WTC11 (cell line): ENCODE measurements at regions of chr14 and their contacts with region 1.

Region 1: GRCh38 chr14:100709289-100710284 is 17.1 kb upstream of the DLK1 start:
- DNase-seq: peak; percentile 67
- ATAC-seq: peak; percentile 16
- H3K4me3 Mint-ChIP-seq: peak overlapping the region; percentile 75
- H3K27ac Mint-ChIP-seq: no peak overlapping the region
- H3K4me1 Mint-ChIP-seq: peaks cover 27% of the 10 kb centered on the region
- H3K27me3 Mint-ChIP-seq: peaks cover 21% of the 10 kb centered on the region
- CTCF ChIP-seq: peak; percentile 58

Region 2: GRCh38 chr14:100673036-100673806 is 36.4 kb before region 1 on chr14:
- CTCF ChIA-PET with region 1: interaction called, 11 read pairs
- POLR2A ChIA-PET with region 1: no interaction called
- DNase-seq: peak; percentile 62
- ATAC-seq: peak; percentile 87
- H3K4me3 Mint-ChIP-seq: peak overlapping the region; percentile 38
- H3K27ac Mint-ChIP-seq: no peak overlapping the region
- H3K4me1 Mint-ChIP-seq: peaks cover 26% of the 10 kb centered on the region
- H3K27me3 Mint-ChIP-seq: peaks cover 24% of the 10 kb centered on the region
- CTCF ChIP-seq: no peak

Region 3: DNA sequence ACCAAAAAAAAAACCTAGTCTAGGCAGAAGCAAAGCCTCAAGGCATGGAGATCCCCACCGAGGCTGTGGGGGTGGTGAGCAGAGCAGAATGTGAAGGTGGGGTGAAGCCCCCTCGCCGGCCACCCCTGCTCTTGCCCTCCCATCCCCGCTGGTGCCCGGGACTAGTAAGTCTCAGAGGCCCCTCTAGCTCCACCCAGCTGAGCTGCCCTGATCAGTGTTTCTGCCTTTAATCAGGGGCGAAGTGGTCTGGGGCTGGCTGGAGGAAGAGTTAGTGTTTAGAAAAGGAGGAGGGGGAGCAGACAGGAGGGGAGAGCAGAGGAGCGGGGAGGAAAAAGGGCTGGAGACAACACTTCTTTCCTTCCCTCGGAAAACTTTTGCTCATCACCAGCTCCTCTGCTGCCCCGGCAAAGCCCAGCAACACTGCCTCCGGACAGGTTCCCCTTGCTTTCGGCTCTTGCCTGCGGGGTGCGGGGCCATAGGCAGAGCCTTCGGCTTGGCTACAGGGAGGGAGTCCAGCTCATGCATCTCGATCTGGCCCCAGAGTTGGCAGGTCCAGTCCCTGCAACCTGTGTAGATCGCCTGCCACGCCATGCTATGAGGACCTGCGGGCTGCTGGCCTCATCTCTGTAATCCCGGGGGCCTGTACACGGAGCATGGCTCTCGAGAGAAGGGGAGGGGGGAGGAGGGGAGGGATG is 13.7 kb after region 1 on chr14:
- CTCF ChIA-PET with region 1: interaction called, 39 read pairs
- POLR2A ChIA-PET with region 1: no interaction called
- DNase-seq: no peak
- ATAC-seq: 0 out of 2 replicates have a peak, but pooled peaks have one; percentile 5
- H3K4me3 Mint-ChIP-seq: no peak overlapping the region
- H3K27ac Mint-ChIP-seq: no peak overlapping the region
- H3K4me1 Mint-ChIP-seq: peaks cover 31% of the 10 kb centered on the region
- H3K27me3 Mint-ChIP-seq: peaks cover 70% of the 10 kb centered on the region
- CTCF ChIP-seq: no peak

Region 4: GRCh38 chr14:100733152-100733850 is 23.7 kb after region 1 on chr14:
- CTCF ChIA-PET with region 1: interaction called, 25 read pairs
- POLR2A ChIA-PET with region 1: no interaction called
- DNase-seq: no peak
- ATAC-seq: no peak
- H3K4me3 Mint-ChIP-seq: no peak overlapping the region
- H3K27ac Mint-ChIP-seq: no peak overlapping the region
- H3K4me1 Mint-ChIP-seq: no peaks in the 10 kb centered on the region
- H3K27me3 Mint-ChIP-seq: peaks cover 19% of the 10 kb centered on the region
- CTCF ChIP-seq: no peak

Region 5: DNA sequence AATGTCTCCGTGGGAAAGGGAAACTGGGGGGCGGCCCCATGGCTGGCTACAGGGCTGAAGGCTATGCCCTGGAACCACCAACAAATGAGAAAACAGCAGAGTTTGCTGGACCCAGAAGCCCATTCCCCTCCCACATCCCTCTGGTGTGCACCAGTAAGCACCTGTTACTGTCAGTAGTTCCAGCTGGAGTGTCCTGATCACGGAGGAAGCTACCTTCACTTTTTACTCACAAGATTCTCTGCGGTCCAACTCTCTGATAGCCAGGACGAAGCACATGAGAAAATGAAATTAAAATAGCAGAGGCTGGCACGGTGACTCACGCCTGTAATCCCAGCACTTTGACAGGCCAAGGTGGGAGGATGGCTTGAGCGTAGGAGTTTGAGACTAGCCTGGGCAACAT is 93.6 kb after region 1 on chr14:
- CTCF ChIA-PET with region 1: interaction called, 11 read pairs
- POLR2A ChIA-PET with region 1: no interaction called
- DNase-seq: no peak
- ATAC-seq: no peak
- H3K4me3 Mint-ChIP-seq: no peak overlapping the region
- H3K27ac Mint-ChIP-seq: no peak overlapping the region
- H3K4me1 Mint-ChIP-seq: peaks cover 48% of the 10 kb centered on the region
- H3K27me3 Mint-ChIP-seq: peaks cover 4% of the 10 kb centered on the region
- CTCF ChIP-seq: no peak

Region 6: DNA sequence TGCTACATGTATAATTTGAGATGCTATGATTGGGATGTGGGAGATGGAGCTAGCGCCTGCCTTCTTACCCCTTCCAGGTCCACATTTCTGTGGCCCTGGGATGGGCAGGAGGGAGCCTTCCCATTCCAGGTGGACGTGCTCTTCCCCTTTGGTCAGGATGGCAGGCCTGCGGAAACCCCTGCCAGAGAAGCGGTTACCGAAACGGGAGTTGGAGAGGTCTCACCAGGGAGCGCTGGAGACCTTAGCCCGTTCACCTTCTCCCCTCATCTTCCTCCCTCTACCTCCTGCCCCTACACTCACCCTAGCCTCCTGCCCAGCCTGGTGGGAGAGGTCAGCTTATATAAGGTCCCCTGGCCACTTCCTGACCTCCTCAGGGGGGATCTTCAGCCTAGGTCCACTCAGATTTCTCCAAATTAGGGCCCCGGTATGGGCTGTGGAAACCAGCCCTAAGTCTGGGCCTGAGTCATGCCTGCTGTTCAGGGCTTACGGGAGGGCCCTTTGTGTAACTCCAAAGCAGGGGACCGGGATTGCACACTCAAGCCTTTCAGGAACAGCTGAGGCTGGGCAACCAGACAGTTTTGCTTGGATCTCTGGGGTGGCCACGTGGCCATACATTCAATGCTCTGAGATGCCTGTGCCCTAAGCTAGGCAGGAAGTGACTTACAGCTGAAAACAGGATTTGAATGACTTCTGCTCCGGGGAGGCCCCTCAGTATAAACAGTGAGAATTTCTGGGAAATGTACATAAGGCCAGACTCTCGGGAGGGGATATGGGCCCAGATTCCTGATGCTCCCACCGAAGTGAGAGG is 106.1 kb after region 1 on chr14:
- CTCF ChIA-PET with region 1: interaction called, 11 read pairs
- POLR2A ChIA-PET with region 1: no interaction called
- DNase-seq: no peak
- ATAC-seq: no peak
- H3K4me3 Mint-ChIP-seq: no peak overlapping the region
- H3K27ac Mint-ChIP-seq: 0 out of 2 replicates have a peak overlapping the region, but pooled peaks have one; percentile 26
- H3K4me1 Mint-ChIP-seq: peaks cover 48% of the 10 kb centered on the region
- H3K27me3 Mint-ChIP-seq: no peaks in the 10 kb centered on the region; the same call in 1 of the 2 replicates
- CTCF ChIP-seq: no peak

Region 7: DNA sequence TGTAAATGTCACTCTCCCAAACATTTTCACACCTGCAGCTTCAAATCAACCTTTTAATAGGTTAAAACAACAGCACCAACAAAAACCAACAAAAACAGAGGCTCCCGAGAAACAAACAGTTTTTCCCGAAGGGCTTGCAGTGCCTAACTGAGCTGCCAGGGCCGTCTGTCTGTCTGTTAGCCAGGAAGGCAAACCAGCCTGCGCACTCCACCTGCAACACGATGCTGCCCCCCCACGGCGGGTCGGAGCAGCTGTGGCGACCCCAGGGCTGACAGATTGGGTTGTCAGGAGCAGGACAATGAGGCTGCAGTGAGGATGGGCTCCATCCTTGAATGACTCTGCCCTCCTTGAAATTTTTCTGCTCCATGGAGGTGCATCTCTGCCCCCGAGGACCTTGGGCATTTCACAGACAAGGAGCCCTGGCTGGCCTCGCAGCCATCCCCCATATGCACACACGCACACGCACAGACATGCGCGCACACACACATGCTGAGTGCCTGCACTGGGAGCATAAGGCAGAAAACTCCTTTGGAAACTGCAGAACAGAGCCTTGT is 191.3 kb after region 1 on chr14:
- CTCF ChIA-PET with region 1: interaction called, 24 read pairs
- POLR2A ChIA-PET with region 1: no interaction called
- DNase-seq: peak; percentile 75
- ATAC-seq: peak; percentile 38
- H3K4me3 Mint-ChIP-seq: peak overlapping the region; percentile 65
- H3K27ac Mint-ChIP-seq: peak overlapping the region; percentile 60; the same call in 1 of the 2 replicates
- H3K4me1 Mint-ChIP-seq: peaks cover 63% of the 10 kb centered on the region
- H3K27me3 Mint-ChIP-seq: peaks cover 62% of the 10 kb centered on the region
- CTCF ChIP-seq: 0 out of 2 replicates have a peak, but pooled peaks have one; percentile 13

Region 8: GRCh38 chr14:101147848-101148826 is 438.6 kb after region 1 on chr14:
- CTCF ChIA-PET with region 1: no interaction called
- POLR2A ChIA-PET with region 1: no interaction called
- DNase-seq: no peak
- ATAC-seq: no peak
- H3K4me3 Mint-ChIP-seq: no peak overlapping the region
- H3K27ac Mint-ChIP-seq: peak overlapping the region; percentile 47; the same call in 1 of the 2 replicates
- H3K4me1 Mint-ChIP-seq: peaks cover 31% of the 10 kb centered on the region
- H3K27me3 Mint-ChIP-seq: no peaks in the 10 kb centered on the region
- CTCF ChIP-seq: no peak